ENCODE measurements at regions of chr11 and their contacts with region 1.

Region 1: DNA sequence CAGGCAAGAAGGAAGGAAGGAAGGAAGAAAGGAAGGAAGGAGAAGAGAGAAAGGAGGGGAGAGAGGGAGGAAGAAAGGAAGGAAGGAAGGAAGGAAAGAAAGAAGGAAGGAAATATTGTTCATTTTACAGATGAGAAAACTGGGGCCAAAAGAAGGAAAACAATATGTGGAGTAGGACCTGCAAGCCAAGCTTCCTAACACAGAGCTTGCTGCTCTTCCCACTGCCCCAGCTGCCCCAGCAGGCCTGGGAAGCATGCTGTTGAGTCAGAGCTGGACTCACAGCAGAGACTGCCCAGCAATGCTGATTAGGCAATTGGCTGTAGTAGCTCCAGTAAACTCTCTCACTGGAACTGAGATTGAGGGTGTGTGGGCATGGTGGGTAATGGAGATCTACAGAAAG is 42.6 kb upstream of the SMCO4 start:
- DNase-seq: no peak
- ATAC-seq: peak in 1 of 8 donors; percentile 55
- H3K4me3 ChIP-seq: no peak overlapping the region
- H3K27ac ChIP-seq: no peak overlapping the region
- H3K4me1 ChIP-seq: no peaks in the 10 kb centered on the region
- H3K27me3 ChIP-seq: peaks cover 0 to 13% (median 6%) of the 10 kb centered on the region in 7 donors
- CTCF ChIP-seq: no peak

Region 2: GRCh38 chr11:93537767-93538261 is 47.9 kb before region 1 on chr11:
- intact Hi-C with region 1: no loop called
- DNase-seq: no peak
- ATAC-seq: peak; percentile 14 to 48 (median 38)
- H3K4me3 ChIP-seq: peak overlapping the region in 7 of 10 donors; percentile 1 to 23 (median 12)
- H3K27ac ChIP-seq: peak overlapping the region; percentile 26 to 94 (median 63)
- H3K4me1 ChIP-seq: peaks cover 5 to 84% (median 58%) of the 10 kb centered on the region in 9 donors
- H3K27me3 ChIP-seq: no peaks in the 10 kb centered on the region
- CTCF ChIP-seq: no peak

Region 3: GRCh38 chr11:93548679-93549319 is 37.0 kb before region 1 on chr11:
- intact Hi-C with region 1: no loop called
- DNase-seq: no peak
- ATAC-seq: no peak
- H3K4me3 ChIP-seq: no peak overlapping the region
- H3K27ac ChIP-seq: no peak overlapping the region
- H3K4me1 ChIP-seq: peaks cover 0 to 7% (median under 1%) of the 10 kb centered on the region in 9 donors
- H3K27me3 ChIP-seq: peaks cover 0 to 3% (median 0%) of the 10 kb centered on the region in 7 donors
- CTCF ChIP-seq: no peak

Region 4: GRCh38 chr11:94424662-94425061 is 838.9 kb after region 1 on chr11:
- intact Hi-C with region 1: loop called in 1 of 10 experiments (anchors 10 kb)
- DNase-seq: no peak
- ATAC-seq: no peak
- H3K4me3 ChIP-seq: no peak overlapping the region
- H3K27ac ChIP-seq: no peak overlapping the region
- H3K4me1 ChIP-seq: no peaks in the 10 kb centered on the region
- H3K27me3 ChIP-seq: no peaks in the 10 kb centered on the region
- CTCF ChIP-seq: no peak

Measured in heart right ventricle (tissue), 16 donors.